MCF 10A (cell line): ENCODE measurements at regions of chr3 and their contacts with region 1.

Region 1: DNA sequence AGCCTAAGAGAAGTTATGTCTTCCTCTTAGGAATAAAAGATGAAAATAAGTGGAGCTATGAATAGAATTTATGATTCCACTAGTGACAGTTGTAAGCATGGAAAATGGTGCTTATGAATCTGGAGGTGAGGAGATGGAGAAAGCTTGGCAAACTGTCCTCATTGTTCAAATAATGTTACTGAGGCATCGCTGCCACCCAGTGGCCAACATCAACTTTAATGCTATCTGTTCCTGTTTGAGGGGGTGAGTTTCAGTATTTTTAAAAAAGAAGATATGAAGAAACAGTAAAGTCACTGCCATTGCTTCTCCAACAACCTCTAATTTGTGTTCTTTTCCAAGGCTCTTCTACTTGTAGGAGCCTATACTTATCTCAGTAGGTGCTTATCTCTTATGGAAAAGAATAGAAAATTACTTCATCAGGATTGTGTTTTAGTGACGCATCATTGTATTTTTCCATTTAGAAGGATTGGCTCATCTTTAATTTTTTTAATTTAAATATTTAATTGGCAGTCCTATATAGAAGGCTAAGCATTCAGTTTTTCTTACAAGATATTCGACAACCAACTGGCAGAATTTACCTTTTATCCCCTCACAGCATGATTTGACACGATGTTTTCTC is 260.4 kb upstream of the P2RY1 start:
- DNase-seq: peak; percentile 69
- H3K4me3 Mint-ChIP-seq: no peak overlapping the region
- H3K27ac Mint-ChIP-seq: no peak overlapping the region
- H3K4me1 Mint-ChIP-seq: no peaks in the 10 kb centered on the region
- H3K27me3 Mint-ChIP-seq: no peaks in the 10 kb centered on the region
- CTCF ChIP-seq: peak; percentile 42

Region 2: DNA sequence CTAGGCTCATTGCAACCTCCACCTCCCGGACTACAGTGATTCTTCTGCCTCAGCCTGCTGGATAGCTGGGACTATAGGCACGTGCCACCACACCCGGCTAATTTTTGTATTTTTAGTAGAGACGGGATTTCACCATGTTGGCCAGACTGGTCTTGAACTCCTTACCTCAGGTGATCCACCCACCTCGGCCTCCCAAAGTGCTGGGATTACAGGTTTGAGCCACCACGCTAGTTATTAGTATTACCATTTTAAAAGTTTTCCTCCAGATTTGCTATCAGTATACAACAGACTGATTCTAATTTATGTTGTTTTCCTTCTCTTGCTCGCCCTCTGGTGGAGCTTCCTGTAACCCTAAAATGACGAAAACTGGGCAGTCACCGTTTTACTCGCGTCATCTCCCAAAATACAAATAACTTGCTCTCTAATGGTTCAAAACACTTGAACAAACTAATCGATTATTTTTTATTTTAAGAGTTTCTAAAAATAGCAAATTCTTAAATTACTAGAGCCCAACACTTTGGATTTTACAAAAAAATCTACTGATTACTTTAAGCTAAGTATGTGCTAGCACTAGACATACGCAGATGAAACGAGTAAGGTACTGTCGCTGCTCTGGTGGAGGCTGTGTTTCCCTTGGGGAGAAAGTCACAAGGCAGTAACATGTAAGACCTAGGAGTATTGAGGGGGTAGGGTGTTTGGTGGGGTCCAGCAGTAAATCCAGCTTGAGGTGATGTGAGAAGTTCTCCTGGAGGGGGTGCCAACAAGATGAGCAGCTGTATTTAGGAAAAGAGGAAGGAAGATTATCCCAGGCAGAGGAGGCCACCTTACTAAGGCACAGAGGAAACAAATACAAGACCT is 102.5 kb before region 1 on chr3:
- CTCF ChIA-PET with region 1: interaction called, 4 read pairs
- POLR2A ChIA-PET with region 1: no interaction called
- intact Hi-C with region 1: loop called (anchors 1 kb)
- DNase-seq: peak; percentile 59
- H3K4me3 Mint-ChIP-seq: no peak overlapping the region
- H3K27ac Mint-ChIP-seq: no peak overlapping the region
- H3K4me1 Mint-ChIP-seq: no peaks in the 10 kb centered on the region
- H3K27me3 Mint-ChIP-seq: no peaks in the 10 kb centered on the region
- CTCF ChIP-seq: peak; percentile 42

Region 3: GRCh38 chr3:152508705-152509104 is 65.9 kb before region 1 on chr3:
- CTCF ChIA-PET with region 1: interaction called, 18 read pairs
- POLR2A ChIA-PET with region 1: no interaction called
- intact Hi-C with region 1: no loop called
- DNase-seq: peak; percentile 31
- H3K4me3 Mint-ChIP-seq: no peak overlapping the region
- H3K27ac Mint-ChIP-seq: no peak overlapping the region
- H3K4me1 Mint-ChIP-seq: no peaks in the 10 kb centered on the region
- H3K27me3 Mint-ChIP-seq: no peaks in the 10 kb centered on the region
- CTCF ChIP-seq: peak; percentile 35